ENCODE measurements at regions of chr1 and their contacts with region 1.

Region 1: GRCh38 chr1:159798893-159799292 is 3.3 kb upstream of the FCRL6 start:
- DNase-seq: peak; percentile 70
- ATAC-seq: peak; percentile 52
- H3K4me3 Mint-ChIP-seq: no peak overlapping the region
- H3K27ac Mint-ChIP-seq: no peak overlapping the region
- H3K4me1 Mint-ChIP-seq: peaks cover 37% of the 10 kb centered on the region
- H3K27me3 Mint-ChIP-seq: peaks cover 1% of the 10 kb centered on the region
- CTCF ChIP-seq: peak; percentile 77

Region 2: GRCh38 chr1:159612211-159612885 is 186.5 kb before region 1 on chr1:
- CTCF ChIA-PET with region 1: no interaction called
- POLR2A ChIA-PET with region 1: no interaction called
- intact Hi-C with region 1: no loop called
- DNase-seq: no peak
- ATAC-seq: no peak
- H3K4me3 Mint-ChIP-seq: no peak overlapping the region
- H3K27ac Mint-ChIP-seq: no peak overlapping the region
- H3K4me1 Mint-ChIP-seq: no peaks in the 10 kb centered on the region
- H3K27me3 Mint-ChIP-seq: peaks cover 7% of the 10 kb centered on the region
- CTCF ChIP-seq: no peak

Region 3: DNA sequence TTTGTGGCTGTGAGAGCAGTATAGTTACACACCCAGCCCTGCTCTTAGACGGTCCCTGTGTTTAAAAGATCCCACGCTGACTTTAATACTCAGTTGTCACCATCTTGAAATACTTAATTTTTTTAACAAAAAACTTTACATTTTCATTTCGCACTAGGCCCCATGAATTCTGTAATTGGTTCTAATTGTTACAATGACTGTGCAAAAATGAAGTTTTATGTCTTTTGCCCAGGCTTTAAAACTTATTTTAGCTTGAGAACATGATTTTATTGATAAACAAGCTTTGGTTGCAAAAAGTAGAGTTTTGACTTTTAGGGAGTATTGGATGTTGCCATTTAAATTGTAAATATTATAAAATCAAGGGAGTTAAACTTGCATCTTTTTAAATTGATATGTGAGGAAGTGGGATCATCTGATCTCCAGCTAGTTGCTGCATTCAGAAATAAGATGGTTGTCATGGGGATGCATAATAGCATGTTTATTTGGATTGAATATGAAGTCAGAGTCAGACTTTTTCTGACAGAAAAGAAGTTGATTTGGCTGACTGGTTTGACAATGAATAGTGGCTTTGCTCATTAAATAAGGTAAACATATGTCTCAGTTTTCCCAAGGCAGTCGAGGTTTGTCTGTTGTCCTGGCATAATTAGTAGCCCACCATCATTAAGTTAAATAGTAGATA is 61.5 kb before region 1 on chr1:
- CTCF ChIA-PET with region 1: no interaction called
- POLR2A ChIA-PET with region 1: no interaction called
- intact Hi-C with region 1: no loop called
- DNase-seq: no peak
- ATAC-seq: no peak
- H3K4me3 Mint-ChIP-seq: no peak overlapping the region
- H3K27ac Mint-ChIP-seq: no peak overlapping the region
- H3K4me1 Mint-ChIP-seq: no peaks in the 10 kb centered on the region
- H3K27me3 Mint-ChIP-seq: peaks cover 15% of the 10 kb centered on the region
- CTCF ChIP-seq: no peak

Region 4: DNA sequence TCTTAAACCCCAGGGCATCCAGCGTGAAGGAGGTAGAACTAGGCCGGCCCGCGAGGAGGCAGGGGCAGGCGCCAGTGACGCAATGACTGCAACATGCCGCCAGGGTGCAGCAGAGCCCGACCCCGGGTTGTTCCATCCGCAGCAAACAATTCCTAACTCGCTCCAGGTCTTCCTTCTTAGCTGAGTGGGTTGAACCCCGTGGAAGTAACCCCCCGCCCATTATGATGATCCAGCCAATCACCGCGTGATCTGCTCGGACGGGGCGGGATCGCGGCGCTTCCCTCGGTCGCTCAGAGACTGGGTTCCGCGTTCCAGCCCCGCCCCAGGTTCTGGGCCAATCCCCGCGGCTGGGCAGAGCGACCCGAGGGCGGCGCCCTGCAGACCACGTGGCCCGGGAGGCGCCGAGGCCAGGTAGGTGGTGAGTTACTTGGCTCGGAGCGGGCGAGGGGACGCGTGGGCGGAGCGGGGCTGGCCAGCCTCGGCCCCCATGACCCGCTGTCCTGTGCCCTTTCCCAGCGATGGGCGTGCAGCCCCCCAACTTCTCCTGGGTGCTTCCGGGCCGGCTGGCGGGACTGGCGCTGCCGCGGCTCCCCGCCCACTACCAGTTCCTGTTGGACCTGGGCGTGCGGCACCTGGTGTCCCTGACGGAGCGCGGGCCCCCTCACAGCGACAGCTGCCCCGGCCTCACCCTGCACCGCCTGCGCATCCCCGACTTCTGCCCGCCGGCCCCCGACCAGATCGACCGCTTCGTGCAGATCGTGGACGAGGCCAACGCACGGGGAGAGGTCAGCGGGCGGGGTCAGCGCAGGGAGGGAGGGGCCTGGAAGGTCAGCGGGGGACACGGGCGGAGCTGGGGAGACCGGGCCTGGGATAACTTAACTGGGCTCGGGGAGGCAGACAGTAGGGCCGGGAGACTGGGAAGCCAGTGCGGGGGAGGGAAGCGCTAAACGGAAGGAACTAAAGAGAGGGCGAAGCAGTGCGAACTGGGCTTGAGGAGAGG is 18.0 kb before region 1 on chr1 and contains the start of gene DUSP23:
- CTCF ChIA-PET with region 1: interaction called, 22 read pairs
- POLR2A ChIA-PET with region 1: interaction called, 3 read pairs
- intact Hi-C with region 1: no loop called
- DNase-seq: peak; percentile 96
- ATAC-seq: peak; percentile 99
- H3K4me3 Mint-ChIP-seq: peak within 1 kb of the TSS; percentile 73
- H3K27ac Mint-ChIP-seq: peak within 1 kb of the TSS; percentile 44
- H3K4me1 Mint-ChIP-seq: peaks cover 7% of the 10 kb centered on the region
- H3K27me3 Mint-ChIP-seq: no peaks in the 10 kb centered on the region
- CTCF ChIP-seq: peak; percentile 85
- total RNA-seq, gene DUSP23: 27.2 TPM

Region 5: GRCh38 chr1:159821171-159821867 is 22.4 kb after region 1 on chr1:
- CTCF ChIA-PET with region 1: interaction called, 10 read pairs
- POLR2A ChIA-PET with region 1: interaction called, 6 read pairs
- intact Hi-C with region 1: no loop called
- DNase-seq: no peak
- ATAC-seq: no peak
- H3K4me3 Mint-ChIP-seq: no peak overlapping the region
- H3K27ac Mint-ChIP-seq: no peak overlapping the region
- H3K4me1 Mint-ChIP-seq: peaks cover 32% of the 10 kb centered on the region
- H3K27me3 Mint-ChIP-seq: no peaks in the 10 kb centered on the region
- CTCF ChIP-seq: no peak

Region 6: DNA sequence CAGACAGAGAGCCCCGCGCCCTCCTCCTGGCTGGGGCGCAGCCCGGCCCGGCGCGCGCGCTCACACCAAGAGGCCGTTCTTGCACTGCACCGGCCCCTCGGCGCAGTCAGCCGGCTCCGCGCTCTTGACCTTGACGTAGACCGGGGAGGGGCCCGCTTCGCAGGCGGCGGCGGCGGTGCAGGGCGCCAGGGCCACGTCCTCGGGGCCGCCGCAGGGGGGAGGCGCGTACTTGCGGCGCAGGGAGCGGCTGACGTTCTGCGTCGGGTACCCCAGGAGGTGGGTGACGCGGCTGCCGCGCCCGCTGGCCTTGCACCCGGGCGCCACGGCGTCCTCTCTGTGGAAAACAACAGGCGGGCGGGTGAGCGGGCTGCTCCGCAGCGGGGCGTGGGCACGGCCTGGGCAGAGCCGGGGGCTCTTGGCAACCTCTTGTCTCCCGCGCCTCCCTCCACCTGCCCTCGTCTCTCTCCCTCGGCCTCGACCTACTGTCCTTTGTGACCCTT is 55.9 kb after region 1 on chr1:
- CTCF ChIA-PET with region 1: interaction called, 57 read pairs
- POLR2A ChIA-PET with region 1: no interaction called
- intact Hi-C with region 1: no loop called
- DNase-seq: peak; percentile 83
- ATAC-seq: peak; percentile 95
- H3K4me3 Mint-ChIP-seq: peak overlapping the region; percentile 77
- H3K27ac Mint-ChIP-seq: peak overlapping the region; percentile 80
- H3K4me1 Mint-ChIP-seq: peaks cover 23% of the 10 kb centered on the region
- H3K27me3 Mint-ChIP-seq: no peaks in the 10 kb centered on the region
- CTCF ChIP-seq: peak; percentile 11

Region 7: DNA sequence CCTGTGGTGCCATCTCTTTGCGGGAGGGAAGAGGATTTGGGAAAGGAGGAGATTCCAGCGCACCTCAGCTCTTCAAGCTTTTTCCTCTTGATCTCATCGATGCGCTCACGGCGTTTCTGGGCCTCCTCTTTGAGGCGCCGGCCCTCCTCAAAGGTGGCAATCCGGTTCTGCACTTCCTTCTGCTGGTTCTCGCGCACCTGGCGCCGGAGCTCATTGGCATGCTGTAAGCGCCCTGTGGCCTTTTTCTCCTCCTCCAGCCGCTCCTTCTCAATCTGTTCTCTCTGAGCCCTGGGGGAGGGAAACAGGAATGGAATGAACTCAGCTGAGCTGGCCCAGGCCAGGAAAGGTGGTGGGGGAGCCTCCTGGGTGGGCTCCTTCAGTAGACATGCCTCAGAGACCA is 74.0 kb after region 1 on chr1:
- CTCF ChIA-PET with region 1: interaction called, 18 read pairs
- POLR2A ChIA-PET with region 1: no interaction called
- intact Hi-C with region 1: no loop called
- DNase-seq: no peak
- ATAC-seq: no peak
- H3K4me3 Mint-ChIP-seq: no peak overlapping the region
- H3K27ac Mint-ChIP-seq: no peak overlapping the region
- H3K4me1 Mint-ChIP-seq: peaks cover 9% of the 10 kb centered on the region
- H3K27me3 Mint-ChIP-seq: peaks cover 3% of the 10 kb centered on the region
- CTCF ChIP-seq: no peak

Region 8: DNA sequence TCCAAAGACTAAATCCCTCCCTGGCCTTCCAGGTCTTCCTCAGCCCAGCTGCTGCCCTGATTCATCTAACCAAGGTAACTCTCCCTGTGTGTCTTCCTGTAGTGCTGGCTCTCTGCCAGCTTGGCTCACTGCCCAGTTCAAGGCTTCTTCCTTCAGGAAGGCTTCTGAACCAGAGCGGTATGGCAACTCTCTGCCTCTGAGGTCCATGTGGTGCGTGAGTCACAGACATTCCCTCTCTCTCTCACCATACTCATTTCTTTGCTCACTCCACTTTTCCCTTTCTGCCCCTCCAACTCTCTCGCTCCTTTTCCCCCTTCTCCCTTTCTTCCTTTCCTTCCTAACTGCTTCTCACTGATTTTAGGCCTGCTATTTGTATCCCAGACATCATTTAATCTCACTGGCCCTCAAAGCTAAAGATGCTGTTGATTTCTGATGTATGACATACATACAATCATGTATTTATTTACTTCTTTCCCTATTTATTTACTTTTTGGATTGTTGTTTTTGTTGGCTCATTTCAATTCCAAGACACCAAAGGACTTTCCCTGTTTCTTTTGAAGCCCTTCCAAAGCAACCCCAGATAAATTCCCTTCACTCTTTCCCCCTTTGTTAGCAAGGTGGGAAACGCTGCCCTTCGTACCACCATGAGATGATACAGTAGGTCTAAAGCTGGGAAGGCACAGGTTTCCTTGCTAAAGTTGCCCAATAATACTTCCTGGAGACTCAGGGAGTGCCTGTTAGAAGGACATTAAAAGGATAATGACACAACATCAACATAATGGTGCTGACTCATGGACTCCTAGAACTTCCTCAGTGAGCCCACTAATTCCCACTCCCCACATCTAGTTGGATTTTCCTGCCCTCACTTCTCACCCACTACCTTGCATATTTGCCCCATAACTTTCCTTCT is 83.3 kb after region 1 on chr1:
- CTCF ChIA-PET with region 1: interaction called, 482 read pairs
- POLR2A ChIA-PET with region 1: no interaction called
- intact Hi-C with region 1: no loop called
- DNase-seq: peak; percentile 25
- ATAC-seq: no peak
- H3K4me3 Mint-ChIP-seq: no peak overlapping the region
- H3K27ac Mint-ChIP-seq: no peak overlapping the region
- H3K4me1 Mint-ChIP-seq: no peaks in the 10 kb centered on the region
- H3K27me3 Mint-ChIP-seq: no peaks in the 10 kb centered on the region
- CTCF ChIP-seq: no peak

Region 9: DNA sequence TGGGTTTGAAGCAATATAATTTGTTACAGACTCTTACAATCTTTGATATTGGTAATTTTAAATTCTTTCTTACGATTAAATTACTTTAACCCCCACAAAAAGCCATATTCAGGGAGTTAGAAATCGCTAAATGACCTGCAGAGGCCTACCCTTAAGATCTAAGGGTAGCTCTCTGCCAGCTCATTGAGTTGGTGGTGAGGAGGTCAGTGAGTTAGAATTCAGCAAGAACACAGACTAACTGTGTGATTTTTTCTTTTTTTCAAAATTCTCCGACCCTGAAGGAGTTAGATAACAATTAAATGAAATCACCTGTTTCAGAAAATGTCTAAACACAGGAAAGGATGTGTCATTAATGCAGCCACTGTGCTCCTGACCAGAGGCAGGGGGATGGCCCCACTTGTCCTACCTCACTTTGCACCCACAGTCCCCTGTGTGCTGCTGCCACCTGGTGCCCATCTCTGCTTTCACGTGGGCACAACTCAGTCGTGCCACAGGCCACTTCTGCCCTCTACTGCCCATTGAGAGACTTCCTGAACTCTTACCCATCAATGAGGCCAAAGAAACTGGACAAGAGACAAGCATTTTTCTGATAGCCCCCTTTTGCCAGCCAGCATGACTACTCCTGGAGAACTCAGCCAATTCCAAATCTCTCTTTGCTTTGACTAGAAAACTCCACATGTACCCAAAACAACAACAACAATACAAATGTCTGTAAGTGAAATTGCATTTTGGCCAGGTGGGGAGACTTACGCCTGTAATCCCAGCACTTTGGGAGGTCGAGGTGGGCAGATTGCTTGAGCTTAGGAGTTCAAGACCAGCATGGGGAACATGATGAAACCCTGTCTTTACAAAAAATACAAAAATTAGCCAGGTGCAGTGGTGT is 92.6 kb after region 1 on chr1:
- CTCF ChIA-PET with region 1: interaction called, 482 read pairs
- POLR2A ChIA-PET with region 1: interaction called, 4 read pairs
- intact Hi-C with region 1: loop called (anchors 1 kb)
- DNase-seq: peak; percentile 87
- ATAC-seq: peak; percentile 98
- H3K4me3 Mint-ChIP-seq: no peak overlapping the region
- H3K27ac Mint-ChIP-seq: no peak overlapping the region
- H3K4me1 Mint-ChIP-seq: peaks cover 14% of the 10 kb centered on the region
- H3K27me3 Mint-ChIP-seq: no peaks in the 10 kb centered on the region
- CTCF ChIP-seq: peak; percentile 99